ENCODE measurements at regions of chr14 and their contacts with region 1.

Region 1: DNA sequence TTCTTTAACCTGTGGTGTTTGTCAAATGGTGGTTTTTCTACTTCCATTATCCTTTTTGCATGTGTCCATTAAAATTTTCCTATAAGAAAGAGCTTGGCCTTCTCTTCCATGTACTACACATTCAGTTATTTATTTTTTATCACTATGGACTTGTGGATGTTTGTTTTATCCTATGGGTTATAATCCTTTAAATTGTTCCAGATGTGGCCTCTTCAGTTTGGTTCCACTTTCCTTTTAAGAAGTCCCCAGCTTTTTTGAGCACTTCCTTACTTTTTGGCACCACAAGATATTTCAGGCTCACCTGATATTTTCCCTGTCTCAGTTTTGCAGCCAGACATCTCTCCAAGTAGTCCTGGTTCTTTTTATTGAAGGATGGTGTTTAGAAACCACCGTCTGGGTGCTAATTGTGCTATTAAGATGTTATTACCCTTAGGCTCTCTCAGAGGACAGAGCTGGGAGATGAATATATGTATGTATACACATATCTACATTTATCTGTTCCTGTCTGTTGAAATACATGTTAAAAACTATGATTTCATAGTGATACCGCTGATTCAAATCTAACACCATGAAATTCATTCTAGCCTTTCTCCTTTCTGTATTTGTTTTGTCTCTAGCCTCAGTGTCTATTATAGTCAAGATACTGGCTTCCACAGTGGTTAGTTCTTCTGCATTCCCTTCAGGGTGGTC is 408.5 kb upstream of the RGS6 start:
- DNase-seq: no peak
- H3K4me3 Mint-ChIP-seq: no peak overlapping the region
- H3K27ac Mint-ChIP-seq: peak overlapping the region; percentile 32
- H3K4me1 Mint-ChIP-seq: peaks cover 21% of the 10 kb centered on the region
- H3K27me3 Mint-ChIP-seq: no peaks in the 10 kb centered on the region

Region 2: GRCh38 chr14:71478542-71478941 is 45.2 kb before region 1 on chr14:
- intact Hi-C with region 1: loop called (anchors 5 kb)
- DNase-seq: no peak
- H3K4me3 Mint-ChIP-seq: peak overlapping the region; percentile 63
- H3K27ac Mint-ChIP-seq: peak overlapping the region; percentile 87
- H3K4me1 Mint-ChIP-seq: peaks cover 55% of the 10 kb centered on the region
- H3K27me3 Mint-ChIP-seq: no peaks in the 10 kb centered on the region

Measured in activated T-helper 1 cell treated with anti-CD3 and anti-CD28 coated beads, Interleukin-12 subunit alpha, Interleukin-12 subunit beta, Interleukin-2, Interleukin-4 antibody, amounts not matched to agents 30 ng/mL and 10 ng/mL and 1 ng/mL, durations not matched to agents 14 hours and 24 hours and 36 hours (primary cell).